ENCODE measurements at regions of chr6 and their contacts with region 1.

Region 1: DNA sequence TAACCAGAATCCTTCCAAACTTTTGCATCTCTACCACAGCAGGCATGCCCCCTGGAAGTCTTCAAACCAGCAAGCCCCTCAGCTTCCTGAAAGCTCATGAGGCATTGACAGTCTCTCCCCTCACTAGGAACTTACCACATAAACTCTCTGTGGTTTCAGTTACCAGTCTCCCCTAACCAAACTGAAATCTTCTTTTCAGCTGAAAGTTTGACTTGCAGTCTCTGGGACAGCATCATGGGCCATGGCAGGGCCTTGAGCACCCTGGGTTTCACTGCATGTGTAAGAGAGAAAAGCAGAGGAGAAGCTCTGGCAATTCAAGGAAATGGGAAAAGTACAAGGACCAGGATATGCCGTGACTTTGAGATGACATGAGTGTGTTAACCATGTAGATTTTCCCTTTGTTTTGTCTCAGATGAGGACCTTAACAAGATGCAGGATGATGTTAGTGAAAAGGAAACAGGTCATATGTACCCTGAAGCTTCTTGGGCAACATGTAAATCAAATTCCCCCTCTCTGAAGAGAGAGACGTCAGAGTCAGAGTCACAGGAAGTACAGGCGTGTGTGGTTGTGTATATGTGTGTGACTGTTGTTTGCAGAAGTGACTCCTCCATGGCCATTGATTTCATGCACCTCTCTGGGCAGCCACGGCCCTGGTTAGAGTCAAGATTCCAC is 106.3 kb downstream of the TNFRSF21 start:
- DNase-seq: peak; percentile 42
- H3K4me3 Mint-ChIP-seq: no peak overlapping the region
- H3K27ac Mint-ChIP-seq: peak overlapping the region; percentile 66
- H3K4me1 Mint-ChIP-seq: peaks cover 19% of the 10 kb centered on the region
- H3K27me3 Mint-ChIP-seq: peaks cover 4% of the 10 kb centered on the region

Region 2: GRCh38 chr6:47134476-47135189 is 68.8 kb before region 1 on chr6:
- CTCF ChIA-PET with region 1: no interaction called
- intact Hi-C with region 1: loop called (anchors 1 kb)
- DNase-seq: no peak
- H3K4me3 Mint-ChIP-seq: no peak overlapping the region
- H3K27ac Mint-ChIP-seq: peak overlapping the region; percentile 28
- H3K4me1 Mint-ChIP-seq: peaks cover 11% of the 10 kb centered on the region
- H3K27me3 Mint-ChIP-seq: peaks cover 14% of the 10 kb centered on the region

Region 3: GRCh38 chr6:47146428-47147174 is 56.8 kb before region 1 on chr6:
- CTCF ChIA-PET with region 1: no interaction called
- intact Hi-C with region 1: no loop called
- DNase-seq: no peak
- H3K4me3 Mint-ChIP-seq: no peak overlapping the region
- H3K27ac Mint-ChIP-seq: no peak overlapping the region
- H3K4me1 Mint-ChIP-seq: no peaks in the 10 kb centered on the region
- H3K27me3 Mint-ChIP-seq: no peaks in the 10 kb centered on the region

Region 4: DNA sequence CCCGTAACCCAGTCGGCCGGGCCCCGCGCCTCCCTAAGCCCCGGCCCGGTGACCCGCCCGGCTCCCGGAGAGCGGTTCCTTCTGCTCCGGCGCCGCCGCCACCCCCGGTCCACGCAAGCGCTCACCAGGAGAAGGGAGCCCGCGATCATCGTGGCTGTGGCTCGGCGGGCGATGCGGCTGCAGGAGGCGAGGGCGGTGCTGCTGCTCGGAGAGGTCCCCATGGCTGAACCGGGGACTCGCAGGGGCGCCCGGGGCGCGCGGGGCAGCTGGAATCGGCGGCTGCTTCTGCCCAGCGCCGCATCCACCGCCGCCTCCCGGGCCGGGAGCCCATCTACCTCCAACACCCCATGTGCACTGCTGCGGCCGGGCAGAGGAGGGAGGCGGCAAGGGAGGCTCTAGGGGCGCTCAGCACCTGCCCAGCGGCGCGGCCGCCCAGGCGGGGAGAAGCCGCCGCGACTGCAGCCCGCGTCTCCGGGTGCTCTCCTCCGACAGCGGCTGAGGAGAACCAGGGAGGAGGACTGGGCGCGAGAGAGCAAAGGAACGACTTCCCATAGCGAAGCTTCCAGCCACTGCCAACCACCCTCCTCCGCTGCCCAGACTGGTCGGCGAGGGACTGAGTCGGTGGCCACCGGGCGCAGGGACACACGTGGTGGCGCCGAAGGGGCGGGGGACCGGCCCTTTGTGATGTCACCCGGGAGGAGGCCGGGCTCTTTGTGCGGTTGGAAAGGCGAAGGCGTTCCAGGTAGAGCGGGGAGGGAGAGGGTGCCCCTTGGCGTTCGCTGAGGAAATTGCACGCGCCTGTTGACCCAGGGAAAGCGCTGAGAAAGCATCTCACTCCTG is 106.1 kb after region 1 on chr6 and contains the start of gene TNFRSF21:
- CTCF ChIA-PET with region 1: no interaction called
- intact Hi-C with region 1: loop called (anchors 5 kb)
- DNase-seq: peak; percentile 91
- H3K4me3 Mint-ChIP-seq: peak within 1 kb of the TSS; percentile 74
- H3K27ac Mint-ChIP-seq: no peak within 1 kb of the TSS
- H3K4me1 Mint-ChIP-seq: peaks cover 7% of the 10 kb centered on the region
- H3K27me3 Mint-ChIP-seq: peaks cover 42% of the 10 kb centered on the region
- total RNA-seq, gene TNFRSF21: 3.6 to 4.3 TPM